Activated naive CD4-positive, alpha-beta T cell treated with anti-CD3 and anti-CD28 coated beads, Interleukin-2, amount 10 ng/mL, durations not matched to agents 7 days and 5 days (primary cell): ENCODE measurements at regions of chr5 and their contacts with region 1.

Region 1: DNA sequence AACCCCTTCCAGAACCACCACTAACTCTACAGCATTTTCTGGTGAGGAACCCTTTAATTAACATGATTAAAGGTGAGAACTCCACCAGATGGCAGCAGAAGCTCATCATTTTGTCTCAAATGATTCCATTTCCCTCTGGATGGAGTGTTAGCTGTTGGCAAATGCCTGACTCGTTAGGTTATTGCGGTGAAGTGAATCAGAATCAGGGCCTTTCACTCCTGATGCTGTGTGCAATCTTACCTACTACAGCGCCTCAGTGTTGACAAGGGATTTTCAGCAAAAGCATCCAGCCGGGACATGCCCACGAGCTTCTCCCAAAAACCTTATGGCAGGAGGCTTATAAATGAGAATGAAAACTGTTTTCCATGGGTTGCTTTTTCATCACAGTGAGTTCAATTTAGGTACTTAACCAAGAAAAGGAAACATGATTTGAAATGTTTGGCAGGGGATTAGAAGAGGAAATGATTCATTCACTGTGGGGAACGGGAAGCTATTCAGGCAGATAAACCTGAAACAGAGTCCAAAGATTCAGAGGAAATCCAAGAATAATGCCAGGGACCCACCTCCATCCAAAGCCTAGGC is 48.0 kb upstream of the CAST start:
- DNase-seq: peak; percentile 59
- H3K4me3 Mint-ChIP-seq: no peak overlapping the region
- H3K27ac Mint-ChIP-seq: no peak overlapping the region
- H3K4me1 Mint-ChIP-seq: peaks cover 6% of the 10 kb centered on the region
- H3K27me3 Mint-ChIP-seq: peaks cover 24% of the 10 kb centered on the region

Region 2: GRCh38 chr5:96113170-96113939 is 500.8 kb before region 1 on chr5:
- CTCF ChIA-PET with region 1: no interaction called
- DNase-seq: no peak
- H3K4me3 Mint-ChIP-seq: no peak overlapping the region
- H3K27ac Mint-ChIP-seq: no peak overlapping the region
- H3K4me1 Mint-ChIP-seq: peaks cover 11% of the 10 kb centered on the region
- H3K27me3 Mint-ChIP-seq: no peaks in the 10 kb centered on the region

Region 3: DNA sequence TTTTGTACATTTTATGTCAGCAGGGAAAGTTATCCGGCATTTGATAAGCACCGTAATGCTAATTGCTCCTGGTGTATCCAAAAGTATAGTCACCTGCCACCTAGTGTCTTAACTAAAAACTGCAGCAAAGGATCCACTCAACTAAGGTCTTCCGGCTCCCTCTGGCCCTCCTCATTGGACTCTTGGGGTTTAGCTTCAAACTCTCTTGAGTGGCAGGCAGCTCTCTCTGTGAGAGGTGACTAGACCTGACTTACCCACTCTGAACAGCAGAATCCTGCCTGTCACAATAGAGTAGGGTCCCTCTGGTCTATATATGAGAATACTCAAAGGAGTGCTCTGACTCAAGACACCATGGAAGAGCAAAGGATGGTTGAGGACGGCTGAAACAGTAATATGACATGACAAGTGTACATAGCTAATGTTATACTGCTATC is 12.4 kb before region 1 on chr5:
- CTCF ChIA-PET with region 1: interaction called, 10 read pairs
- DNase-seq: peak; percentile 59
- H3K4me3 Mint-ChIP-seq: no peak overlapping the region
- H3K27ac Mint-ChIP-seq: no peak overlapping the region
- H3K4me1 Mint-ChIP-seq: no peaks in the 10 kb centered on the region
- H3K27me3 Mint-ChIP-seq: peaks cover 18% of the 10 kb centered on the region

Region 4: DNA sequence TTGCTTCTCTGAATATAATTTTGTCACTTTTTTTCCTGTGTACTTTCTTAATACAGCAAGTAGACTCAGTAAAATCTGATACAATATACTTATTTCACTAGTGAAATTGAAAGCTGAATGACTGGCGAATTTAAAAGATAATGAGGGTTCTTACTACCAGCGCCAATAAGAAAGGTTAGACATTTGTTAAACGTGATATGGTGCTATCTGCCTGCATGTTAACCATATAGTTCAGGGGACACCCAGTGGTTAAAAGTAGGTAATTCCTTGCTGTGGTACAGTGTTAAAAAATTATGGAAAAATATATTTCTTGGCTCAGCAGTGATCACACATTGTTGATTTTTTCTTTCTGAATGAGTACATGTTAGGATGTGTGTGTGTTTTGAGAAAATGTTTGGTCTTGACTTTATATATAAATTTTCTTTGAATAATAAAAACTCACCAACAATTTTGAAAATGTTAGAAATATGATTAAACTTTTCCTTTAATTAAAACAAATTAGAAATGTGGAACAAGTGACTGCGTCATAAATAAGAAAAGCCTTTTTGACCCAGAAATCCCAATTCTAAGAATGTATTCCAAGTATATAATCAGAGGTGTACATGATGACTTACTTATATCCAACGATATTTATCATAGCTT is 73.7 kb after region 1 on chr5:
- CTCF ChIA-PET with region 1: interaction called, 17 read pairs
- DNase-seq: no peak
- H3K4me3 Mint-ChIP-seq: no peak overlapping the region
- H3K27ac Mint-ChIP-seq: no peak overlapping the region
- H3K4me1 Mint-ChIP-seq: peaks cover 9% of the 10 kb centered on the region
- H3K27me3 Mint-ChIP-seq: no peaks in the 10 kb centered on the region

Region 5: GRCh38 chr5:96752341-96753016 is 138.3 kb after region 1 on chr5:
- CTCF ChIA-PET with region 1: interaction called, 12 read pairs
- DNase-seq: peak; percentile 41
- H3K4me3 Mint-ChIP-seq: no peak overlapping the region
- H3K27ac Mint-ChIP-seq: no peak overlapping the region
- H3K4me1 Mint-ChIP-seq: no peaks in the 10 kb centered on the region
- H3K27me3 Mint-ChIP-seq: no peaks in the 10 kb centered on the region

Region 6: GRCh38 chr5:96896806-96897205 is 282.6 kb after region 1 on chr5:
- CTCF ChIA-PET with region 1: no interaction called
- DNase-seq: no peak
- H3K4me3 Mint-ChIP-seq: peak overlapping the region; percentile 64
- H3K27ac Mint-ChIP-seq: peak overlapping the region; percentile 93
- H3K4me1 Mint-ChIP-seq: peaks cover 58% of the 10 kb centered on the region
- H3K27me3 Mint-ChIP-seq: no peaks in the 10 kb centered on the region